ENCODE measurements at regions of chr11 and their contacts with region 1.

Region 1: GRCh38 chr11:18721561-18722292 is 4.3 kb downstream of the IGSF22 start:
- DNase-seq: peak in 13 of 14 experiments; percentile 20 to 77 (median 35)
- ATAC-seq: peak; percentile 45
- H3K4me3 ChIP-seq: peak overlapping the region; percentile 94
- H3K4me3 Mint-ChIP-seq: peak overlapping the region; percentile 82
- H3K27ac ChIP-seq: peak overlapping the region in 1 of 2 donors; percentile 29
- H3K27ac Mint-ChIP-seq: peak overlapping the region; percentile 35
- H3K4me1 ChIP-seq: peaks cover 21% of the 10 kb centered on the region
- H3K4me1 Mint-ChIP-seq: peaks cover 10% of the 10 kb centered on the region
- H3K27me3 ChIP-seq: no peaks in the 10 kb centered on the region
- H3K27me3 Mint-ChIP-seq: no peaks in the 10 kb centered on the region
- CTCF ChIP-seq: peak; percentile 88

Region 2: GRCh38 chr11:18253231-18253630 is 468.5 kb before region 1 on chr11:
- CTCF ChIA-PET with region 1: no interaction called
- POLR2A ChIA-PET with region 1: no interaction called
- intact Hi-C with region 1: no loop called
- DNase-seq: no peak
- ATAC-seq: no peak
- H3K4me3 ChIP-seq: no peak overlapping the region
- H3K4me3 Mint-ChIP-seq: no peak overlapping the region
- H3K27ac ChIP-seq: no peak overlapping the region
- H3K27ac Mint-ChIP-seq: no peak overlapping the region
- H3K4me1 ChIP-seq: no peaks in the 10 kb centered on the region
- H3K4me1 Mint-ChIP-seq: no peaks in the 10 kb centered on the region
- H3K27me3 ChIP-seq: no peaks in the 10 kb centered on the region
- H3K27me3 Mint-ChIP-seq: peaks cover 8% of the 10 kb centered on the region
- CTCF ChIP-seq: no peak

Region 3: GRCh38 chr11:18540207-18541009 is 181.3 kb before region 1 on chr11:
- CTCF ChIA-PET with region 1: interaction called, 11 read pairs
- POLR2A ChIA-PET with region 1: interaction called, 3 read pairs
- intact Hi-C with region 1: no loop called
- DNase-seq: peak in 3 of 14 experiments; percentile 65 to 71 (median 66)
- ATAC-seq: peak; percentile 77
- H3K4me3 ChIP-seq: no peak overlapping the region
- H3K4me3 Mint-ChIP-seq: no peak overlapping the region
- H3K27ac ChIP-seq: no peak overlapping the region
- H3K27ac Mint-ChIP-seq: peak overlapping the region; percentile 21
- H3K4me1 ChIP-seq: no peaks in the 10 kb centered on the region
- H3K4me1 Mint-ChIP-seq: no peaks in the 10 kb centered on the region
- H3K27me3 ChIP-seq: no peaks in the 10 kb centered on the region
- H3K27me3 Mint-ChIP-seq: no peaks in the 10 kb centered on the region
- CTCF ChIP-seq: peak; percentile 79

Region 4: GRCh38 chr11:18588297-18589252 is 133.2 kb before region 1 on chr11 and contains the start of gene UEVLD:
- CTCF ChIA-PET with region 1: no interaction called
- POLR2A ChIA-PET with region 1: no interaction called
- intact Hi-C with region 1: loop called in 1 of 2 experiments (anchors 5 kb)
- DNase-seq: peak in 13 of 14 experiments; percentile 5 to 86 (median 38)
- ATAC-seq: peak; percentile 45
- H3K4me3 ChIP-seq: peak within 1 kb of the TSS; percentile 90
- H3K4me3 Mint-ChIP-seq: no peak within 1 kb of the TSS
- H3K27ac ChIP-seq: peak within 1 kb of the TSS; percentile 66 to 92
- H3K27ac Mint-ChIP-seq: no peak within 1 kb of the TSS
- H3K4me1 ChIP-seq: peaks cover 52% of the 10 kb centered on the region
- H3K4me1 Mint-ChIP-seq: no peaks in the 10 kb centered on the region
- H3K27me3 ChIP-seq: no peaks in the 10 kb centered on the region
- H3K27me3 Mint-ChIP-seq: no peaks in the 10 kb centered on the region
- CTCF ChIP-seq: no peak
- total RNA-seq, gene UEVLD: 1.5 to 2.9 TPM

Region 5: GRCh38 chr11:18669220-18669598 is 52.5 kb before region 1 on chr11:
- CTCF ChIA-PET with region 1: interaction called, 3 read pairs
- POLR2A ChIA-PET with region 1: interaction called, 3 read pairs
- intact Hi-C with region 1: loop called (anchors 2 to 5 kb)
- DNase-seq: peak in 4 of 14 experiments; percentile 10 to 43 (median 28)
- ATAC-seq: no peak
- H3K4me3 ChIP-seq: no peak overlapping the region
- H3K4me3 Mint-ChIP-seq: no peak overlapping the region
- H3K27ac ChIP-seq: no peak overlapping the region
- H3K27ac Mint-ChIP-seq: peak overlapping the region; percentile 40
- H3K4me1 ChIP-seq: peaks cover 32% of the 10 kb centered on the region
- H3K4me1 Mint-ChIP-seq: peaks cover 57% of the 10 kb centered on the region
- H3K27me3 ChIP-seq: no peaks in the 10 kb centered on the region
- H3K27me3 Mint-ChIP-seq: no peaks in the 10 kb centered on the region
- CTCF ChIP-seq: no peak

Region 6: DNA sequence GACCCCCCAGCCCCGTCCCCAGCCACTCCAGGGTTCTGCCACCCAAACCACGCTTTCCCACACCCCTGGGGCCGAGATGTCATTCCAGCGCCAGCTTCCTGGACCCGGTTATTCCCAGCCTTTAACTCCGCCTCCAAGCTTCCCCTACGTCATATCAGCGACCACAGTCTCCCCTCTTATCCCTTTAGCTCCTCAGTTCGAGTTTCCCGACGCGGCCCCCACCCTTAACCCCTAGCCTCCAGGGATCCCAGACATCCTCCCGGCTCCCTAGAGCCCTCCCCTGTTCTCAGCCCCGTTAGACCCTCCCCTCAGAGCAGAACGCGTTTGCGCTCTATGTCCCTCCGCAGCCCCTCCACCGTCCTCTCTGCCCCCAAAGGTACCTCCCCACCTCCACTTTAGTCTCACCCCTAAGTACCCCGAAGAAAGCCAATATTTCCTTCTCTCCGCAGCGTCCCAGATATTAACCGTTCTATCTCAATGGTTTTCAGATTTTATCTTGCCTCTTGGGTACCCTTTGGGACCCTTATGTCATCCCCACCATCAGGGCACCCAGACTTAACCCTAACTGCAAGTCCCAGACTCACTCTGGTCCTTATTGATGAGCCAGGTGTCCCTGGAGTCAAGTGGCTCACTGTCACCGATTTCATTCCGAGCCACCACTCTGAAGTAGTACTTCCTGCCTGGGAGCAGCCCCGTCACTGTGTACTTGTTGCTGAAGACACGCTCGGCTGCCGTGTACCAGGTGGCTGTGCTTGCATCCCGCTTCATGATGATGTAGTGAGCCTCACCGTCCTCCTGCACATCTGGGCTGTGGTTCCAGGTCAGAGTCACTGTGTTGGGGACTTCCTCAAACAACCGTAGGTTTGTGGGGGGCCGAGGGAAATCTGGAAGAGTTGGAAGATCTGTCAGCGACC is 15.1 kb before region 1 on chr11:
- CTCF ChIA-PET with region 1: interaction called, 7 read pairs
- POLR2A ChIA-PET with region 1: interaction called, 13 read pairs
- intact Hi-C with region 1: no loop called
- DNase-seq: peak; percentile 37 to 84 (median 49)
- ATAC-seq: peak; percentile 90
- H3K4me3 ChIP-seq: peak overlapping the region; percentile 61
- H3K4me3 Mint-ChIP-seq: peak overlapping the region; percentile 95
- H3K27ac ChIP-seq: peak overlapping the region; percentile 23 to 50
- H3K27ac Mint-ChIP-seq: peak overlapping the region; percentile 82
- H3K4me1 ChIP-seq: peaks cover 26% of the 10 kb centered on the region
- H3K4me1 Mint-ChIP-seq: peaks cover 21% of the 10 kb centered on the region
- H3K27me3 ChIP-seq: peaks cover 0 to 3% of the 10 kb centered on the region in 2 experiments
- H3K27me3 Mint-ChIP-seq: no peaks in the 10 kb centered on the region
- CTCF ChIP-seq: no peak

Region 7: GRCh38 chr11:18731949-18732821 is 10.5 kb after region 1 on chr11:
- CTCF ChIA-PET with region 1: interaction called, 13 read pairs
- POLR2A ChIA-PET with region 1: no interaction called
- intact Hi-C with region 1: no loop called
- DNase-seq: peak; percentile 40 to 82 (median 67)
- ATAC-seq: peak; percentile 80
- H3K4me3 ChIP-seq: no peak overlapping the region
- H3K4me3 Mint-ChIP-seq: no peak overlapping the region
- H3K27ac ChIP-seq: no peak overlapping the region
- H3K27ac Mint-ChIP-seq: no peak overlapping the region
- H3K4me1 ChIP-seq: peaks cover 17% of the 10 kb centered on the region
- H3K4me1 Mint-ChIP-seq: peaks cover 10% of the 10 kb centered on the region
- H3K27me3 ChIP-seq: no peaks in the 10 kb centered on the region
- H3K27me3 Mint-ChIP-seq: no peaks in the 10 kb centered on the region
- CTCF ChIP-seq: peak; percentile 97

Measured in CD4-positive, alpha-beta T cell (primary cell).